GM10248 (cell line): ENCODE measurements at regions of chr10 and their contacts with region 1.

Region 1: GRCh38 chr10:110210674-110211464 is 3.5 kb downstream of the MXI1 start:
- DNase-seq: peak; percentile 96
- CTCF ChIP-seq: no peak

Region 2: DNA sequence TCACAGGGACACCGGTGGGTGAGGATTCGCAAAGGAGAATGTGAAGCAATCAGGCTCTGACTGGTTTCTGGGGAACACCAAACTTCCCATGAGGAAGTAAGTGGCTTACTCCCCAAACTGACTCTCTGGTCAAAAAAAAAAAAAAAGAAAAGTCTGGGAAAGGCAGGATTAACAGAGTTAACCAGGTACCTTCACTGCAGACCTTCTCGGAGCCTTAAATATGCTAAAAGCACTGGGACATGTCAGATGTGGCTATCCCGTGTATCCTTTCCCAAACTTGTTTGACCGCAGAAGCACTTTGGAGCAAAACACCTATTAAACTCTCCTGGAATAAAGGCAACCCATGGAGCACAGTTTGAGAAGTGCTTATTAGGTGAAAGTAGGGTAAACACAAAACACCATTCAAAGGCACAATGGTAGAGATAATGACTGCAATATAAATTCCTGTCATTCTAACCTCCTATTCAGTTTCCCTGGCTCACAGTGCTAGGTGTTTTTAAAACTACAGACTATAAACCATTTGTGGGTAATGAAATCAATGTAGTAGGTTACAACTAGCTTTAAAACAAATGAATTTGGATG is 47.6 kb before region 1 on chr10:
- CTCF ChIA-PET with region 1: interaction called, 10 read pairs
- POLR2A ChIA-PET with region 1: no interaction called
- DNase-seq: no peak
- CTCF ChIP-seq: no peak

Region 3: GRCh38 chr10:110176141-110177030 is 34.5 kb before region 1 on chr10:
- CTCF ChIA-PET with region 1: interaction called, 14 read pairs
- POLR2A ChIA-PET with region 1: no interaction called
- DNase-seq: no peak
- CTCF ChIP-seq: no peak

Region 4: DNA sequence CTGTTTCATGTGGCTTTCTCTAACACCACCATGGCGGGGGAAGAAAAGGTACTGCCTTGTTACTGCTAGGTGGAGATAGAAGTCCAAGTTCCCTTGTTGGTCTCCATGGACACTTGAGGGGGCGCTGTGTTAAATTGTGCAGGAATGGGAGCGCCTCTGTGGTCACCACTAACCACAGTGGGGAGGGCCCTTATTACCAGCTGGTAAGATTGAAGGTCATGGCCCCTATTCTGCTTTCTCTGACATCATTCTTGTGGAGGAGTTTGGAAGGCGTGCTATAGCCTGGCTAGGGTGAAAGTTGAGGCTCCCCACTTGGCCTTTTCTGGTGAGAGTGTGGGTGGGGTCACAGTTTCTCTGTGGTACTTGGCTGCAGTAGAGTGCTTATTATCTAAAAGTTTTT is 18.3 kb before region 1 on chr10:
- CTCF ChIA-PET with region 1: interaction called, 18 read pairs
- POLR2A ChIA-PET with region 1: interaction called, 4 read pairs
- DNase-seq: peak; percentile 53
- CTCF ChIP-seq: peak; percentile 10

Region 5: DNA sequence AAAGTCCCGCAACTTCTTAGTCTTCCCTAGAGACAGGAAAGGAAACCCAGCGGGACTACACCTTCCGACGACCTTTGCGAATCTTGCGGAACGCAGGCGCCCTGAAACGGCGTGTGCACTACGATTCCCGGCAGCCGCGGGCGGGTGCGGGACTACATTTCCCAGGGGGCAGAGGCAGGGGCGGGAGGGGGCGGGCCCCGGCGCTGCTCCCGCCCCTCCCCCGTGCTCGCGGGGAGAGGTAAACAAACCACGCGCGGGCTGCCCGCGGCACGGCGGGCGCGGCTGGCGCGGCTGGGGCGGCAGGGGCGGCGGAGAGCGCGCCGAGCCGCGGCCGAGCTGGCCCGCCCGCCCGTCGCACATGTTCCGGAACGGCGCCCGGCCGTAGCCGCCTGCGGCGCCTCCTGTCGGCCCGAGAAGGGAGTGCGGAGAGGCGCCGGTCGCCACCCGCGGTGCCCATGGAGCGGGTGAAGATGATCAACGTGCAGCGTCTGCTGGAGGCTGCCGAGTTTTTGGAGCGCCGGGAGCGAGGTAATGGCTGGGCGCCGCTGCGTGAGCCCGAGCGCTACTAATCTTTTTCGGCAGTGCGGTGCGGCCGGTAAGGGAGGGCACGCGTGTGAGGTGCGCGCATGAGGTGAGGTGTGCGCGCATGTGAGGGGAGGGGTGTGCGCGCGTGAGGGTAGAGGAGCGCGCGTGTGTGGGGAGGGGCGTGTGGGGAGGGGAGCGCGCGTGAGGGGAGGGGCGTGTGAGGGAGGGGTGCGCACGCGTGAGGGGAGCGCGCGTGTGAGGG is 15.1 kb after region 1 on chr10:
- CTCF ChIA-PET with region 1: interaction called, 82 read pairs
- POLR2A ChIA-PET with region 1: interaction called, 11 read pairs
- DNase-seq: peak; percentile 88
- CTCF ChIP-seq: peak; percentile 83

Region 6: GRCh38 chr10:110279407-110279986 is 68.6 kb after region 1 on chr10:
- CTCF ChIA-PET with region 1: interaction called, 19 read pairs
- POLR2A ChIA-PET with region 1: no interaction called
- DNase-seq: peak; percentile 41
- CTCF ChIP-seq: peak; percentile 66